ENCODE measurements at regions of chr5 and their contacts with region 1.

Region 1: GRCh38 chr5:115169487-115170133 is at the start of gene TRIM36:
- DNase-seq: peak; percentile 96
- ATAC-seq: peak; percentile 98
- H3K4me3 Mint-ChIP-seq: peak within 1 kb of the TSS; percentile 75
- H3K27ac Mint-ChIP-seq: no peak within 1 kb of the TSS
- H3K4me1 Mint-ChIP-seq: peaks cover 6% of the 10 kb centered on the region
- H3K27me3 Mint-ChIP-seq: peaks cover 56% of the 10 kb centered on the region
- total RNA-seq, gene TRIM36: 0.11 TPM in 1 of 2 experiments, not detected in the other

Region 2: GRCh38 chr5:115180165-115180709 is 10.6 kb after region 1 on chr5:
- CTCF ChIA-PET with region 1: interaction called, 3 read pairs
- POLR2A ChIA-PET with region 1: no interaction called
- intact Hi-C with region 1: loop called (anchors 1 kb)
- DNase-seq: peak; percentile 52
- ATAC-seq: peak; percentile 65
- H3K4me3 Mint-ChIP-seq: peak overlapping the region; percentile 71
- H3K27ac Mint-ChIP-seq: no peak overlapping the region
- H3K4me1 Mint-ChIP-seq: peaks cover 8% of the 10 kb centered on the region
- H3K27me3 Mint-ChIP-seq: peaks cover 66% of the 10 kb centered on the region

Region 3: DNA sequence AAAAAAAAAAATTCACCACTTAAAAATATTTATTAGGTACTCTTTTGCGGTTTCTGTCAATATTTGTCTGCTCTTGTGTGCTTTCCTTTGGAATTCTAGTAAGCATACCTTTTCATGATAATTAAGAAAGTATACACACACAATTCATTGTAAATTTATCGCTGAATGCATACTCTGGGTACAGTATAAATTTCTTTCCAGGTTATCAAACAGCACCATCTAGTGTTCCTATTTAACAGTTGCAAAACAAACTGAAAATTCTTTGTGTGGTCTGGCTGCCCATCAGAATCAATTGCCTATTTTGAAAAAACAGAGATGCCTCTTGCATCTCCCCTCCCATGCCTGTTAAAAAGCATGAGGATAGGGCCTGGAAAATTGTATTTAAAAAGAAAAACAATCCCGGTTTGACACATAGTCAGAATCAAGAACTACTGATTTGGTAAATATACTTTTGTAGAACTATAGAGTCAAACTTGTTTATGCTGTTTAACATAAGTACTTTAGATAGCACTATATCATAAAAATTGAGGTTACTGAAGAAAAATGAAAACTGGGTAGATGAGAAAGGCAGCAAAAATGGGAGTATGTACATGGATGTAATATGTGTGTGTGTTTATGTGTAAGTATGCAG is 76.9 kb after region 1 on chr5:
- CTCF ChIA-PET with region 1: interaction called, 3 read pairs
- POLR2A ChIA-PET with region 1: no interaction called
- intact Hi-C with region 1: loop called in 1 of 2 experiments (anchors 10 kb)
- DNase-seq: no peak
- ATAC-seq: no peak
- H3K4me3 Mint-ChIP-seq: no peak overlapping the region
- H3K27ac Mint-ChIP-seq: no peak overlapping the region
- H3K4me1 Mint-ChIP-seq: peaks cover 21% of the 10 kb centered on the region
- H3K27me3 Mint-ChIP-seq: no peaks in the 10 kb centered on the region

Region 4: GRCh38 chr5:115460472-115460871 is 290.9 kb after region 1 on chr5:
- CTCF ChIA-PET with region 1: no interaction called
- POLR2A ChIA-PET with region 1: no interaction called
- intact Hi-C with region 1: loop called in 1 of 2 experiments (anchors 5 kb)
- DNase-seq: peak; percentile 38
- ATAC-seq: peak; percentile 66
- H3K4me3 Mint-ChIP-seq: no peak overlapping the region
- H3K27ac Mint-ChIP-seq: no peak overlapping the region
- H3K4me1 Mint-ChIP-seq: no peaks in the 10 kb centered on the region
- H3K27me3 Mint-ChIP-seq: peaks cover 27% of the 10 kb centered on the region

Region 5: DNA sequence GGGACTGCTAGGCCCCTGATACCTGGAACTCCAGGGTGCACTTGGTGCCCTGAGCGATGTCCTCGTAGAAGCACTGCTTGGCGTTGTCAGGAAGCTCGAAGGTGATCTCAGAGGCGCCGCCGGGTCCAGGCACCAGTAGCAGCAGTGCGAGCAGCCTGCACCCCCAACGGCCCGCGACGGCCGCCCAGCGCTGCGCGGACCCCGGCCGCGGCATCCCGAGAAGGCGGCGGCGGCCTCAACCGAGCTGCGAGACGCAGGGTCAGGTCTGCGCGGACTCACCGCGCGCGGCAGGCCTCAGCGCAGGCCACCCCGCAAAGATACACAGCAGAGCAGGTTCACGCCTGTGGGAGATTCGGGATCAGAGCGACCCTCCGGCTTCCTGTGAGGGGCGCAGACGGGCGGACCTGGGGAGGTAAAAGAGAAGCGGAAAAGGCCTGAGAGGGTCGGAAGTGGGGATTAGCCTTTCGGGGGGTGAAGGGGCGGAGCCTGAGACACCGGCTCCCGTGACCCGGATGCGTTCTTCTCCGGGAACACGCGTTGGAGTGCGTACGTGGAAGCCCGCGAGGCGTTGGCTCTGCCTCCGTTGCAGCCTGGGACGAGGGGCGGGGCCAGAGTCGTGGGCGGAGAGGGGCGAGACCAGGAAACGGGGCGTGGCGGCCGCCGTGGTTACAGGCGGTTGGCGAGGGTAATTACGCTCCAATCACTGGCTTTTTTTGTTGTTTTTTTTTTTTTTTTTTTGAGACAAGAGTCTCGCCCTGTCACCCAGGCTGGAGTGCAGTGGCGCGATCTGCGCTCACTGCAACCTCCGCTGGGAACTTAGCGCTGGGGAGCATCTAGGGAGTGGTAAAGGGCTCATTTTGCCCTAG is 456.2 kb after region 1 on chr5 and contains the start of gene TMED7:
- CTCF ChIA-PET with region 1: interaction called, 3 read pairs
- POLR2A ChIA-PET with region 1: no interaction called
- intact Hi-C with region 1: loop called in 1 of 2 experiments (anchors 1 kb)
- DNase-seq: peak; percentile 100
- ATAC-seq: peak; percentile 92
- H3K4me3 Mint-ChIP-seq: no peak within 1 kb of the TSS
- H3K27ac Mint-ChIP-seq: peak within 1 kb of the TSS; percentile 94
- H3K4me1 Mint-ChIP-seq: peaks cover 25% of the 10 kb centered on the region
- H3K27me3 Mint-ChIP-seq: no peaks in the 10 kb centered on the region
- total RNA-seq, gene TMED7: 31.4 to 36.8 TPM

Measured in activated CD4-positive, alpha-beta T cell treated with anti-CD3 and anti-CD28 coated beads for 36 hours (primary cell).